GM10248 (cell line): ENCODE measurements at regions of chr2 and their contacts with region 1.

Region 1: GRCh38 chr2:24409700-24410556 is 49.6 kb upstream of the ITSN2 start:
- DNase-seq: peak; percentile 77
- CTCF ChIP-seq: peak; percentile 80

Region 2: GRCh38 chr2:24421668-24422067 is 11.7 kb after region 1 on chr2:
- CTCF ChIA-PET with region 1: interaction called, 19 read pairs
- POLR2A ChIA-PET with region 1: no interaction called
- DNase-seq: peak; percentile 52
- CTCF ChIP-seq: peak; percentile 48

Region 3: GRCh38 chr2:24527536-24527935 is 117.6 kb after region 1 on chr2:
- CTCF ChIA-PET with region 1: no interaction called
- POLR2A ChIA-PET with region 1: no interaction called
- DNase-seq: no peak
- CTCF ChIP-seq: no peak

Region 4: DNA sequence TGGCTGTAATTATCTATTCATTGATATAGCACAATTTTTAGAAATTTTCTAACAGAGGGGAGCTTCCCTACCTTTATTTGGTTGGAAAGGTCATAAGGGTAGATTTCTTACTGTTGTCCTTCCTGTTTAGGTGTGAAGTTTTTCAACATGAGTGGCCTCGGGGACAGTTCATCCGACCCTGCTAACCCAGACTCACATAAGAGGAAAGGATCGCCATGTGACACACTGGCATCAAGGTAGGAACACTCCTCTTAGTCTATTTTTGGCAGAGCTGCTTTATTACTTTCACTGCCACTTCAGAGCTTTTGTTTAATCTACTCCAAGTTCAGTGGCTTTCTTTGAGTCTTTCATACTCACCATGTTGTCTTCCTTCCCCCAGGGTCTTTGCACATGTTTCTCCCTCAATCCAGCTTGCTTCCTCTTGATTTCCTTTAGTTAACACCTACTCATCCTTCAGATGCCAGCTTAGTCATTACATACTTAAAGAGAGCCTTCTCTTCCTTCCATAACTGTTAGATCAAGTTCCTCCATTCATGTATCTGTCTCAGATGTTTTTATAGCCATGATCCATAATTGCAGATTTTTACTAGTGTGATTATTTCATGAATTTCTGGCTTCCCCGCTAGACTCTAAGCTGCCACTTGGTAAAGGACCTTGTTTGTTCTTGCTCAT is 248.7 kb after region 1 on chr2:
- CTCF ChIA-PET with region 1: no interaction called
- POLR2A ChIA-PET with region 1: no interaction called
- DNase-seq: no peak
- CTCF ChIP-seq: no peak

Region 5: DNA sequence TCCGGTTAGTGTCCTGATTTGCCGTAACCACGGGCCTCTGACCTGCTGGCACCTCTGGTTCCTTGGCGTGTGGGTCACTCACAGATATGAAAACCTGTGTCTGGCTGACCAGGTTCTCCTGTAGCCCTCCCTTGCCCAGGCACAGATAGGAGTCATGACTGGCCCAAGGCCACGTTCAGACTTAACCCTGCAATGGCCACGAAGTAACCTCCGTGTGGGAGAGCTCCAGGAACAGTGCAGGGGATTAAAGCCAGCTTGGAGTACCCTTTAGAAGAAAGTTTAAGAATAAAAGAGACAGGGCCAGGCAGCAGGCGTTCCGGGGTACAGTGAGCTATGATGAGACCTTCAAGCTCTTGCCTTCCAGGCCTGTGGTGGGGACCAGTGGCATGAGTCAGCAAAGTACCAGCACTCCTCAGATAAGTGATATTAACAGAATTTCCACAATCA is 408.8 kb after region 1 on chr2:
- CTCF ChIA-PET with region 1: interaction called, 17 read pairs
- POLR2A ChIA-PET with region 1: no interaction called
- DNase-seq: no peak
- CTCF ChIP-seq: no peak

Region 6: GRCh38 chr2:25131567-25132298 is 721.8 kb after region 1 on chr2:
- CTCF ChIA-PET with region 1: interaction called, 16 read pairs
- POLR2A ChIA-PET with region 1: no interaction called
- DNase-seq: no peak
- CTCF ChIP-seq: no peak

Region 7: DNA sequence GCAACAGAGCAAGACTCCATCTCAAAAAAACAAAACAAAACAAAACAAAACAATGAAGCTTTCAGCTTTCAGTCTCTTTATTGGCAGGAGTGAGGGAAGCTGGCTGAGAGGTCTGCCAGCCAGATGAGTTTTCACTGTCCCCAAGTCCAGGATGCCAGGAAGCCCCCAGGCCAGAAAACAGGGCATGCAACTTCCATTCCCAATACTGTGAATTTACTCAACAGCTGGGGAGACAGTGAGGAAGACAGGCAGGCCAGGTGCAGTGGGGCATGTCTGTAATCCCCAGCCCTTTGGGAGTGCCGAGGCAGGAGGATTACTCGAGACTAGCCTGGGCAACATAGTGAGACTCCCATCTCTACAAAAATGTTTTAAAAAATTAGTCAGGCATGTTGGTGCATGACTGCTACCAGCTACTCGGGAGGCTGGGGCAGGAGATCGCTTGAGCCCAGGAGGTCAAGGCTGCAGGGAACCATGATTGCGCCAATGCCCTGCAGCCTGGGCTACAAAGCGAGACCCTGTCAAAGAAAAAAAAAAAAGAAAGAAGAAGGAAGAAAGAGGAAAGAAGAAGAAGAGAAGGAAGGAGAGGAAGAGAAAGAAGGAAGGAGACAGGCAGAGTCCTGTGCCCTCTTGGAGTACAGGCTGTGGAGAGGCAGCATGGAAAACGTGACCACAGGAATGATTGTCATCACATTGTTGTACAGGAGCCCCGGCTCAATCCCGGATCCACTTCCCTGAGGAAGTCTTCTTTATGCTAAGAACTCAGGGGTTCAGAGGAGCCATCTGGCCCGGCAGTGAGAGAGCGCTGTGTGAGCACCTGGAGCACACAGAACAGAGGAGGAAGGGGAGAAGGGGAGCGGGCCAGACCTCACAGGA is 787.6 kb after region 1 on chr2:
- CTCF ChIA-PET with region 1: interaction called, 16 read pairs
- POLR2A ChIA-PET with region 1: no interaction called
- DNase-seq: no peak
- CTCF ChIP-seq: no peak